ENCODE measurements at regions of chr3 and their contacts with region 1.

Region 1: DNA sequence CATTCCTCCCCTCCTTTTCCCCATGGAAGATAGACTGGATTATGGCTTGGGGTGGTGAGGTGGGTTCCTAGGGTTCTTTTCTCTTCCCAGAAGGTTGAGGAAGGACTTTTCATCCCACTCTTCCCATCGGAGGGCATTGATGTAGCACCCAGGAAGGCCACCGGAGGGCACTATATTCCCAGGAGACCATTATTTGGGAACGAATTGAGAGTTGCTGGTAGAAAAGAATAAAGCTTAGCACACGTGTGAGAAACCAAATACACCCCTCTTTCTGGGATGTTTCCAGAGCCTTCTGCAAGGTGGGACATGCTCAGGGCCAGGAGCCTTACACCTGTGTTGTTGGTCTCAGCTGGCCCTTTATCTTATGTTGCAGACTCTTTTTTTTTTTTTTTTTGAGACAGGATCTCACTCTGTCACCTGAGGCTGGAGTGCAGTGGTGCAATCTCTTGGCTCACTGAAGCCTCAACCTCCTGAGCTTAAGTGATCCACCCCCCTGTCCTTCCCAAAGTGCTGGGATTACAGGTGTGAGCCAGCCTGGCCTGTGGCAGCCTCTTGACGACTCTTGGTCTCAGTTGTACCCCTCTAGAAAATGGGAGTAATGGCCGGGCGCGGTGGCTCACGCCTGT is 6.3 kb upstream of the CDC25A start:
- DNase-seq: peak; percentile 70
- CTCF ChIP-seq: peak; percentile 78

Region 2: GRCh38 chr3:47890828-47891612 is 303.5 kb before region 1 on chr3:
- CTCF ChIA-PET with region 1: no interaction called
- POLR2A ChIA-PET with region 1: no interaction called
- DNase-seq: no peak
- CTCF ChIP-seq: no peak

Region 3: DNA sequence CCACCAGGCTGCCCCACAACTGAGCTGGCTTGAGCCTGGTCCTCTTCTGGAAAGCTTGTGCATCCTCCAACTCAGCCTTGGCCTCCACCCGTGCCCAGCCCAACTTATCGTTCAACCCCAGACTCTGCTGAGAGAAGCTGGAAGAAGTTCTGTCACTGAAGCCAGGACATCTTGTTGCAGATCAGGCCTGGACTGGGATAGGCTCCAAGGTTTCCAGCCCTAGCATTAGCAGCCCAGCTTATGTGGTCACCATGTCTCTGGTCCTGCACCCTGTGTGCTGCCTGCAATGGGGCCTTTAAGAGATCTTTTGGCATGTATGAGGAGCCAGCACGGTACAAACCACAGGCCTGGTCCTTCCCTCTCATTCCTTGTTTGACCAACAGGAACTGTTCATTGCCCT is 13.5 kb after region 1 on chr3:
- CTCF ChIA-PET with region 1: interaction called, 18 read pairs
- POLR2A ChIA-PET with region 1: no interaction called
- DNase-seq: no peak
- CTCF ChIP-seq: no peak

Region 4: DNA sequence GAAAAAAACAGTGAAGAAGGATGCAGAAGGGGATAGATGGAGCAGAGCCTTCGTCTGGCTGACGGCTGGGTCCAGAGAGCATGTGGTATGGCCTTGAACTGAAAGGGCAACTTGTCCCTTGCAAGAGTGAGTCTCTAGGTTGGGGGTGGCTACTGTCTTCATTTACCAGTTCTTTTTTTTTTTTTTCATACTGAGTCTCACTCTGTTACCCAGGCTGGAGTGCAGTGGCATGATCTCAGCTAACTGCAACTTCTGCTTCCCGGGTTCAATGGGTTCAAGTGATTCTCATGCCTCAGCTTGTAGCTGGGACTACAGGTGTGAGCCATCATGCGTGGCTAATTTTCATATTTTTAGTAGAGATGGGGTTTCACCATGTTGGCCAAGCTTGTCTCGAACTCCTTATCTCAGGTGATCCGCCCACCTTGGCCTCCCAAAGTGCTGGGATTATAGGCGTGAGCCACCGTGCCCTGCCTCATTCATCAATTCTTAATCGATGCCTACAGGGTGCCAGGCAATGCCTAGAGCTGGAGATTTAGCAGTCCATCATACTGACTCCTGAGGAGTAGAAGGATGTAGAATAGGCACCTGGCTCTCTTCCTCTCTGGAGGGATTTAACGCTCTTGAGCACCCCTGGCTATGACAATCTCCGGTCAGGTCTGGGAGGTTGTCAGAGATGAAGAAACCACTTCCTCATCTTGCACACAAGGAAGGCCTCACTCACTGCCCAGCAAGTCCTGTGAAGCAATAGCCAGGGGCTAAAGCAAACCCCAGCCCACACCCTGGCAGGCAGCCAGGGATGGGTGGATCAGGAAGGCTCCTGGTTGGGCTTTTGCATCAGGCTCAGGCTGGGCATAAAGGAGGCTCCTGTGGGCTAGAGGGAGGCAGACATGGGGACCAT is 28.3 kb after region 1 on chr3 and contains the start of gene CAMP:
- CTCF ChIA-PET with region 1: interaction called, 13 read pairs
- POLR2A ChIA-PET with region 1: no interaction called
- DNase-seq: peak; percentile 84
- CTCF ChIP-seq: no peak

Region 5: GRCh38 chr3:48240711-48241491 is 46.3 kb after region 1 on chr3 and contains the start of gene ZNF589:
- CTCF ChIA-PET with region 1: interaction called, 11 read pairs
- POLR2A ChIA-PET with region 1: no interaction called
- DNase-seq: peak; percentile 96
- CTCF ChIP-seq: peak; percentile 53

Region 6: GRCh38 chr3:48352547-48352946 is 158.0 kb after region 1 on chr3:
- CTCF ChIA-PET with region 1: no interaction called
- POLR2A ChIA-PET with region 1: no interaction called
- DNase-seq: no peak
- CTCF ChIP-seq: no peak

Region 7: GRCh38 chr3:48432411-48433372 is 238.1 kb after region 1 on chr3:
- CTCF ChIA-PET with region 1: interaction called, 52 read pairs
- POLR2A ChIA-PET with region 1: no interaction called
- DNase-seq: no peak
- CTCF ChIP-seq: peak; percentile 28

Region 8: GRCh38 chr3:48486952-48487351 is 292.4 kb after region 1 on chr3:
- CTCF ChIA-PET with region 1: no interaction called
- POLR2A ChIA-PET with region 1: no interaction called
- DNase-seq: no peak
- CTCF ChIP-seq: no peak

Measured in GM10248 (cell line).